ENCODE measurements at regions of chr5 and their contacts with region 1.

Region 1: DNA sequence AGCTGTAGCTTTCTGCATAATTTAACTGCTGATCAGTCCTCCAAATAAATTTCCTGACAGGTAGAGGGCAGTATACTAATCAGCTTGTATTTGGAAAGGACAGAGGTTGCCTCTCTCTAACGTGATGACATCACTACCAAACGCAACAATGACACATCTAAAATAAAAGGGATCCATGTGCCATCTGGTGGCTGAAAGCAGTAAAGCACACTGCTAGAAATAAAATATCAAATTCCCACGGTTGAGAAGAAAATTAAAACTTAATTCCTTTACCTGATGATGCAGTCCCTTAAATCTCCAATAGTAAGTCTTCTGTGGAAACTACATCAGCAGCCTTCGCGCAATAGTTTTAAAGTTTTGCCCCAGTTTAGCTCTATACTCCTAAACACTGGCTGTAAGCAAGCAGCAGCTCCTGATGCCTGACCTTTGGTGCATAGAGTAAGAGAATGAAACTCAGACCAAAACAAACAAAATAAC is 54.5 kb downstream of the DIAPH1 start:
- DNase-seq: peak; percentile 84 to 85
- H3K4me3 ChIP-seq: no peak overlapping the region
- H3K4me3 Mint-ChIP-seq: peak overlapping the region; percentile 48
- H3K27ac Mint-ChIP-seq: peak overlapping the region; percentile 90
- H3K4me1 ChIP-seq: peaks cover 6% of the 10 kb centered on the region; the same call in 1 of the 2 replicates
- H3K4me1 Mint-ChIP-seq: peaks cover 30% of the 10 kb centered on the region
- H3K27me3 ChIP-seq: no peaks in the 10 kb centered on the region
- H3K27me3 Mint-ChIP-seq: no peaks in the 10 kb centered on the region
- CTCF ChIP-seq: peak; percentile 86 to 88

Region 2: GRCh38 chr5:141223112-141223783 is 341.0 kb before region 1 on chr5 and contains the start of gene PCDHB14:
- CTCF ChIA-PET with region 1: interaction called, 11 read pairs
- POLR2A ChIA-PET with region 1: no interaction called
- intact Hi-C with region 1: loop called (anchors 1 kb)
- DNase-seq: peak in 1 of 2 experiments; percentile 28
- H3K4me3 ChIP-seq: peak within 1 kb of the TSS; percentile 32
- H3K4me3 Mint-ChIP-seq: peak within 1 kb of the TSS; percentile 58
- H3K27ac Mint-ChIP-seq: no peak within 1 kb of the TSS
- H3K4me1 ChIP-seq: no peaks in the 10 kb centered on the region
- H3K4me1 Mint-ChIP-seq: no peaks in the 10 kb centered on the region
- H3K27me3 ChIP-seq: no peaks in the 10 kb centered on the region
- H3K27me3 Mint-ChIP-seq: no peaks in the 10 kb centered on the region
- CTCF ChIP-seq: peak; percentile 21 to 29
- total RNA-seq, gene PCDHB14: 0.41 and 0.44 TPM in 2 replicates

Region 3: GRCh38 chr5:141326088-141326854 is 238.0 kb before region 1 on chr5:
- CTCF ChIA-PET with region 1: interaction called, 7 read pairs
- POLR2A ChIA-PET with region 1: no interaction called
- intact Hi-C with region 1: loop called (anchors 1 kb)
- DNase-seq: peak; percentile 82 to 85
- H3K4me3 ChIP-seq: peak overlapping the region; percentile 39
- H3K4me3 Mint-ChIP-seq: peak overlapping the region; percentile 93
- H3K27ac Mint-ChIP-seq: peak overlapping the region; percentile 88
- H3K4me1 ChIP-seq: no peaks in the 10 kb centered on the region
- H3K4me1 Mint-ChIP-seq: no peaks in the 10 kb centered on the region
- H3K27me3 ChIP-seq: no peaks in the 10 kb centered on the region
- H3K27me3 Mint-ChIP-seq: no peaks in the 10 kb centered on the region
- CTCF ChIP-seq: peak; percentile 80 to 85

Region 4: GRCh38 chr5:141402553-141403260 is 161.5 kb before region 1 on chr5 and contains the start of gene PCDHGA9:
- CTCF ChIA-PET with region 1: interaction called, 17 read pairs
- POLR2A ChIA-PET with region 1: interaction called, 3 read pairs
- intact Hi-C with region 1: no loop called
- DNase-seq: no peak
- H3K4me3 ChIP-seq: no peak within 1 kb of the TSS
- H3K4me3 Mint-ChIP-seq: no peak within 1 kb of the TSS
- H3K27ac Mint-ChIP-seq: no peak within 1 kb of the TSS
- H3K4me1 ChIP-seq: no peaks in the 10 kb centered on the region
- H3K4me1 Mint-ChIP-seq: no peaks in the 10 kb centered on the region
- H3K27me3 ChIP-seq: no peaks in the 10 kb centered on the region
- H3K27me3 Mint-ChIP-seq: no peaks in the 10 kb centered on the region
- CTCF ChIP-seq: no peak
- total RNA-seq, gene PCDHGA9: 2.8 and 4.4 TPM in 2 replicates

Region 5: DNA sequence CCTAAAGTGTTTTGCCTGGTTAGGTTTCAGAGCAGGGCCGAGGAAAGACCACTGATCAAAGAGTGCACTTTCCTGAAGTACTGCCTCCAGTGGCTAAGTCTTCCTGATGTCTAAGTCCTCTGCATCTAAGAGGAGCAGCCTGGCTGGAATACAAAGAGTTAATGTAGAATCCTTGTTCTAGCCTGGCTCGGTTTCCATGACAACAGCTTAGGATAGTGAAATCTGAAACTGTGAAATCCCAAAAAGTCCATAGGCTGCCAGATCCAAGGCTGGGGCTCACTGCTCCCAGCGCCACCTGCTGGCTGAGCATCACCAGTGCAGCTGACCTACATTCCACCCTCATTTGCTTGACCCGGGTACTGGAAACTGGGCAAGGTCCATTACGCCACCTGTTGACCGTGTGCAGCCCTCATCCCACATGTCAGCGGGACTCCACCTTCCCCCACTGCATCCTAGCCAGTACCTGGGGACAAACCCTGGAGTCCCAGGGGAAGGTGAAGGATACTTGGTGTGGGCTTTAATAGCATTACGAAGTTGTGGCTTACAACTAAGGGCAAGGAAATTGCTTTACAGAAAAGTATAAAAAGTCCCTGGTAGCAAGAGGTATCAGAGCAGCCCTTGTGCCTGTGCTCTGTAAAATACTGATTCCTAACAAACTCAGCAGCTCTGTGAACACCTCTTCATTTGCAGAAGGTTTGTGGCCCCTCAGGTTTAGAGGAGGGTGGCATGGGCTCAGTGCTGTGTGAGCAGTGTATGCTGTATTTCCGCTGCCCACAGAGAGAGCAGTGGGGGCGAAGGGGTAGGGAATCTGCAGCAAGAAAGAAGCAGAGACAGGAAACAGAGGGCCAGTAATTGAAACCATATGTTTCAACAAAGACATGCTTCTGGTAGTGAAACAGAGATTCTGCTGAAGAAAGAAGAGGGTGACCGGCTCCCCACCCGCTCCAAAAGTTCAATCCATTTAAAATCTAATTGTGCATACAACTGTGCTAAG is 39.4 kb before region 1 on chr5:
- CTCF ChIA-PET with region 1: interaction called, 21 read pairs
- POLR2A ChIA-PET with region 1: no interaction called
- intact Hi-C with region 1: loop called (anchors 1 kb)
- DNase-seq: peak; percentile 82 to 88
- H3K4me3 ChIP-seq: no peak overlapping the region
- H3K4me3 Mint-ChIP-seq: peak overlapping the region; percentile 5
- H3K27ac Mint-ChIP-seq: peak overlapping the region; percentile 40
- H3K4me1 ChIP-seq: peaks cover 29% of the 10 kb centered on the region
- H3K4me1 Mint-ChIP-seq: peaks cover 21% of the 10 kb centered on the region
- H3K27me3 ChIP-seq: no peaks in the 10 kb centered on the region
- H3K27me3 Mint-ChIP-seq: no peaks in the 10 kb centered on the region
- CTCF ChIP-seq: peak; percentile 92 to 93

Region 6: DNA sequence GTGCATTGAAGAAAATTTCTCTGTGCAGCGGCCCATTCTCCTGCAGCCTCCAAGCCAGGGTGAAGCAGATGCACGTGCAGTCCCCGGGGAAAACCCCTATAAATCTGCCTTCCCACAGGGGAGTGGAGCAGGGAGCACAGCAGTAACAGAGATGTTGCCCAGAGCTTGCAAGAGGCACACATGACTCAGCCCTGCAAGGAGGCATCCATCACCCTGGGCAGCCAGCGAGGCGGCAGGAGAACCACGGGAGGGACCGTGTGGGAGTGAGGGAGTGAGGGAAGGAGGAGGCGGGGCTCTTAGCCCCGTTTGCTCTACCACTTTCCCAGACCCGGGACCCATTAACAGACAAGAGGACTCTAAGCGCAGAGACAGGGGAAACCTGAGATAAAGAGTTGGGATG is 214.0 kb after region 1 on chr5:
- CTCF ChIA-PET with region 1: no interaction called
- POLR2A ChIA-PET with region 1: no interaction called
- intact Hi-C with region 1: no loop called
- DNase-seq: no peak
- H3K4me3 ChIP-seq: no peak overlapping the region
- H3K4me3 Mint-ChIP-seq: no peak overlapping the region
- H3K27ac Mint-ChIP-seq: no peak overlapping the region
- H3K4me1 ChIP-seq: no peaks in the 10 kb centered on the region
- H3K4me1 Mint-ChIP-seq: no peaks in the 10 kb centered on the region
- H3K27me3 ChIP-seq: no peaks in the 10 kb centered on the region
- H3K27me3 Mint-ChIP-seq: peaks cover 4% of the 10 kb centered on the region
- CTCF ChIP-seq: no peak

Measured in Caco-2 (cell line).